ENCODE measurements at regions of chr19 and their contacts with region 1.

Region 1: DNA sequence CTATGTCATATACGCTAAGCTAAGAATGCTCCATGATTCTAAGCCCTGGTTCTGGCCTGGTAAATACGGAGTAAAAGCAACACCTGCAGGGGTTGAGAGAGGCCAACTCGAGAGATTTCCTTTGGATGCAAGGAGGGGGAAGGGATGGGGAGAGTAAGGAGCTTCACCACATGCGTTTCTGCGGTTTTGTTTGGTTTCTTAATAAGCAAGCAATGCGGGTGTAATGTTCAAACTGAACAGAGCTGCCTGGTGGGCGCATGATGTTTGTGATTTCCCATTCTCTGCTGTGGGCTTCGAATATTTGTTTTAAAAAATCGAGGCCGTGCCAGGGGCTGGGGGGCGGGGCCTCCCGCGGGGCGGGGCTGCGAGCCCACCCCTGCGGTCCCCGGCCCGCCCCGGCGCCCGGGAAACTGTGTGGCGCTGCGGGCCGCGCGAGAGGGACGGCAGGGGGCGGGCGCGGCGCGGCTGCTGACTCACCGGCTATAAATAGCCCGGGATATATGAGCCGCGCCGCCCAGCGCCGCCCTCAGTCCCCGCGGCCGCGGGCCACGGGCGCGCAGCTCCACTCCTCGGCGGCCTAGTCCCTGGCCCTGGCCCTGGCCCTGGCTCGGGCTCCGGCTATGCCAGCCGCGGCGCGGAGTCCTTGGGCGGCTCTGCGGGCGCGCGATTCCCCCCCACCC is 5.1 kb downstream of the BBC3 start:
- DNase-seq: peak; percentile 96

Region 2: GRCh38 chr19:47094557-47095475 is 131.1 kb before region 1 on chr19:
- CTCF ChIA-PET with region 1: no interaction called
- POLR2A ChIA-PET with region 1: no interaction called
- DNase-seq: no peak

Region 3: DNA sequence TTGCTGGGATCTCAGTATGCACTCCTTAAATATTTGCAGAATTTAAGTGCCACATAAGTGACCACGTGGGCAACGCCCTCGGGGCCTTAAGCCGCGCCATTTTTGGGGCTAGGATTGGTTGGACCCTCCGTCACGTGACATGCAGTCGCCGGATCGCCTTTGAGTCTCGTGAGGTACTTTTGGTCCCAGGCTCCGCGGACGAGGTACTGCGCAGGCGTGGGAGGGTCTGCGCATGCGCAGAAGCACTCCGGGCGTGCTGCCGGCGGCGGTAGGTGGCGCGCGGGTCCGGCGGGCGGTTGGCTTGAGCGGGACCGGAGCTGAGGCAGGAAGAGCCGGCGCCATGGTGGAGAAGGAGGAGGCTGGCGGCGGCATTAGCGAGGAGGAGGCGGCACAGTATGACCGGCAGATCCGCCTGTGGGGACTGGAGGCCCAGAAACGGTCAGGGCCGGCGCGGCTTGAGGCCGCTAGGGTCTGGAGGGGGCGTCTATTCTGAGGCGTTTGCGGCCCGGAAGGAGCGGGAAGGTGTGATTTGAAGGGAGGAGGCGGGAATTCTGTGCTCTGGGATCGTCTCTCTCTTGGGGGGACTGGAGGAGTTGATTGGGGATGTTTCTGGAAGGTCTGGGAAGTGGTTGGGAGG is 95.2 kb before region 1 on chr19 and contains the start of gene SAE1:
- CTCF ChIA-PET with region 1: interaction called, 5 read pairs
- POLR2A ChIA-PET with region 1: interaction called, 11 read pairs
- DNase-seq: peak; percentile 99

Region 4: GRCh38 chr19:47210689-47211316 is 15.1 kb before region 1 on chr19:
- CTCF ChIA-PET with region 1: interaction called, 9 read pairs
- POLR2A ChIA-PET with region 1: interaction called, 30 read pairs
- DNase-seq: peak; percentile 73

Region 5: GRCh38 chr19:47256688-47257443 is 31.0 kb after region 1 on chr19:
- CTCF ChIA-PET with region 1: no interaction called
- POLR2A ChIA-PET with region 1: interaction called, 10 read pairs
- DNase-seq: peak; percentile 97

Region 6: GRCh38 chr19:47267350-47267759 is 41.5 kb after region 1 on chr19:
- CTCF ChIA-PET with region 1: no interaction called
- POLR2A ChIA-PET with region 1: no interaction called
- DNase-seq: no peak

Measured in HEK293T (cell line).